AG04449 (cell line): ENCODE measurements at regions of chr22 and their contacts with region 1.

Region 1: DNA sequence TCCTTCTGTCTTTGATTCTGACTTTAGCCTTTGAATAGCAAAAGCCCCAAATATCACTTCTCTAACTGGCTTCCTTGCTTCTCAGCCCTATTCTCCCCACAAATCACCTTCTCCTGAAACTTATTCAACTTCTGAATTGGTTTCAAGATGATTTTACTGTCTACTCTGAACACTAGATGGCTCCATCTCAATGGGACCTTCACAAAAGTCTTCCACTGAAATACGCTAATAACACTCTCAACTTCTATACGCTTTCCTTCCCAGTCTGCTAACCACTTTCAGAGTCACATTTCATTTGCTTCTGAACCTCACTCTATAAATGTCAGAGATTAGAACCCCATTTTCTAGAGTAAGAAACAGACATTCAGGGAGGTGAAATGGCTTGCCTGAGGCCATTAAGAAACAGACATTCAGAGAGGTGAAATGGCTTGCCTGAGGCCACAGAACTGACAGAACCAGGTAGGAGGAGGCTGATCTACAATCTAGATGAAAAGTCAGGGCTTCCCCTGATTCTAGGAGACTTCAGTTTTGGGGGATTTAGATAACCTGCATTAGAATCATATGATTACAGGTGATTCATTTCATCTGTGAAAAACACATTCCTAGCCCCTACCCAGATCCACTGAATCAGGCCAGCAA is 20.6 kb downstream of the MORC2 start:
- DNase-seq: peak; percentile 16
- H3K4me3 ChIP-seq: no peak overlapping the region
- CTCF ChIP-seq: peak; percentile 40

Region 2: GRCh38 chr22:30902496-30903357 is 45.2 kb before region 1 on chr22:
- CTCF ChIA-PET with region 1: no interaction called
- POLR2A ChIA-PET with region 1: no interaction called
- DNase-seq: no peak
- H3K4me3 ChIP-seq: no peak overlapping the region
- CTCF ChIP-seq: no peak

Region 3: GRCh38 chr22:30968924-30969539 is 21.1 kb after region 1 on chr22 and contains the start of gene TUG1:
- CTCF ChIA-PET with region 1: interaction called, 10 read pairs
- POLR2A ChIA-PET with region 1: interaction called, 3 read pairs
- DNase-seq: peak; percentile 91
- H3K4me3 ChIP-seq: peak within 1 kb of the TSS; percentile 73
- CTCF ChIP-seq: no peak

Region 4: GRCh38 chr22:31080848-31081649 is 133.1 kb after region 1 on chr22 and contains the start of gene SMTN:
- CTCF ChIA-PET with region 1: interaction called, 94 read pairs
- POLR2A ChIA-PET with region 1: interaction called, 5 read pairs
- DNase-seq: no peak
- H3K4me3 ChIP-seq: peak within 1 kb of the TSS; percentile 88
- CTCF ChIP-seq: no peak